CD4-positive, alpha-beta T cell (primary cell): ENCODE measurements at regions of chr7 and their contacts with region 1.

Region 1: GRCh38 chr7:134458806-134459698 is at the start of gene AKR1B1:
- DNase-seq: peak; percentile 77 to 93 (median 83)
- ATAC-seq: peak; percentile 88
- H3K4me3 ChIP-seq: peak within 1 kb of the TSS; percentile 77
- H3K4me3 Mint-ChIP-seq: peak within 1 kb of the TSS; percentile 90
- H3K27ac ChIP-seq: peak within 1 kb of the TSS; percentile 18 to 51
- H3K27ac Mint-ChIP-seq: peak within 1 kb of the TSS; percentile 70
- H3K4me1 ChIP-seq: peaks cover 28% of the 10 kb centered on the region
- H3K4me1 Mint-ChIP-seq: peaks cover 53% of the 10 kb centered on the region
- H3K27me3 ChIP-seq: no peaks in the 10 kb centered on the region
- H3K27me3 Mint-ChIP-seq: no peaks in the 10 kb centered on the region
- CTCF ChIP-seq: peak; percentile 63
- total RNA-seq, gene AKR1B1: 60.6 to 65.5 TPM

Region 2: DNA sequence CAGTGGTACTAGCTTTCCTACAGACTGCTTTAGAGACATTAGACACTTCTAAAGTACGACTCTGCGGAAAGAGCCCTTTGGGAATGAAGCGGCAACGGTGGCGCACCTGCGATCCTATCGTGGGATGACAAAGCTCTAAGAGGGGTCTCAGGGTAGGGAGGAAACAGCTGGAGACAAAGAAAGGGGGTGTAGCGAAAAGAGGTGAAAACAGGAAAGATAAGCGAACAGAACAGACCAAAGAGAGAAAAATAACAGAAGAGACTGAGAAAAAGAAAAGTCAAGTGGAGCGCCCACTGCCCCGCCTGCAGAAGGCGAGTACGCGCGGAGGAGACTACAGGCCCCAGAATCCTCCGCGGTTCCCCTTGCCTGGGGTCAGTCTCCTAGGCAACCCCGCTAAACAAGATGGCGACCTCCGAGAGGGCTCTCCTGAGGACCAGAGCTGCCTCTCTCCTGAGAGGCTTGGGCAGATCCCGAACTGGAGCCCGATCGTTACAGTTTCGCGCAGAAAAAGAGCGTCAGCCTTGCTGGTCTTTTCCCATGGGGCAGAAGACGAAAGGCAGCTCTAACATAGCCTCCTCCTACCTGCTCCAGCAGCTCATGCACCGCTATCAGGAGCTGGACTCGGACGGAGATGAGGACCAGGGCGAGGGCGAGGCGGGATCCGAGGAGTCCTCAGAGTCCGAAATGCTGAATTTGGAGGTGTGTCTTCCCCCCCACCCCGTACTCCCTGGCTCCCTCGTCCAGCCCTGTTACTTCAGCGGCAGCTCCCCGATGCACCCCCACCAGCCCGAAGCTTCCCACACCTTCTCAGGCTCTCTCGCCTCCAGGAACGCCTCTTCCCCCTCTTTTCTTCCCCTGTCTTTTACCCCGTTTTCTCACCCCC is 331.8 kb before region 1 on chr7 and contains the start of gene LRGUK:
- CTCF ChIA-PET with region 1: no interaction called
- POLR2A ChIA-PET with region 1: no interaction called
- intact Hi-C with region 1: loop called in 1 of 2 experiments (anchors 2 kb)
- DNase-seq: peak; percentile 55 to 90 (median 72)
- ATAC-seq: peak; percentile 100
- H3K4me3 ChIP-seq: peak within 1 kb of the TSS; percentile 72
- H3K4me3 Mint-ChIP-seq: peak within 1 kb of the TSS; percentile 91
- H3K27ac ChIP-seq: no peak within 1 kb of the TSS
- H3K27ac Mint-ChIP-seq: no peak within 1 kb of the TSS
- H3K4me1 ChIP-seq: peaks cover 12% of the 10 kb centered on the region
- H3K4me1 Mint-ChIP-seq: peaks cover 21% of the 10 kb centered on the region
- H3K27me3 ChIP-seq: no peaks in the 10 kb centered on the region
- H3K27me3 Mint-ChIP-seq: peaks cover 35% of the 10 kb centered on the region
- CTCF ChIP-seq: no peak
- total RNA-seq, gene LRGUK: 0.20 to 0.27 TPM

Region 3: GRCh38 chr7:134388336-134389019 is 70.6 kb before region 1 on chr7:
- CTCF ChIA-PET with region 1: no interaction called
- POLR2A ChIA-PET with region 1: no interaction called
- intact Hi-C with region 1: no loop called
- DNase-seq: no peak
- ATAC-seq: no peak
- H3K4me3 ChIP-seq: no peak overlapping the region
- H3K4me3 Mint-ChIP-seq: no peak overlapping the region
- H3K27ac ChIP-seq: no peak overlapping the region
- H3K27ac Mint-ChIP-seq: no peak overlapping the region
- H3K4me1 ChIP-seq: no peaks in the 10 kb centered on the region
- H3K4me1 Mint-ChIP-seq: no peaks in the 10 kb centered on the region
- H3K27me3 ChIP-seq: no peaks in the 10 kb centered on the region
- H3K27me3 Mint-ChIP-seq: peaks cover 5% of the 10 kb centered on the region
- CTCF ChIP-seq: no peak

Region 4: DNA sequence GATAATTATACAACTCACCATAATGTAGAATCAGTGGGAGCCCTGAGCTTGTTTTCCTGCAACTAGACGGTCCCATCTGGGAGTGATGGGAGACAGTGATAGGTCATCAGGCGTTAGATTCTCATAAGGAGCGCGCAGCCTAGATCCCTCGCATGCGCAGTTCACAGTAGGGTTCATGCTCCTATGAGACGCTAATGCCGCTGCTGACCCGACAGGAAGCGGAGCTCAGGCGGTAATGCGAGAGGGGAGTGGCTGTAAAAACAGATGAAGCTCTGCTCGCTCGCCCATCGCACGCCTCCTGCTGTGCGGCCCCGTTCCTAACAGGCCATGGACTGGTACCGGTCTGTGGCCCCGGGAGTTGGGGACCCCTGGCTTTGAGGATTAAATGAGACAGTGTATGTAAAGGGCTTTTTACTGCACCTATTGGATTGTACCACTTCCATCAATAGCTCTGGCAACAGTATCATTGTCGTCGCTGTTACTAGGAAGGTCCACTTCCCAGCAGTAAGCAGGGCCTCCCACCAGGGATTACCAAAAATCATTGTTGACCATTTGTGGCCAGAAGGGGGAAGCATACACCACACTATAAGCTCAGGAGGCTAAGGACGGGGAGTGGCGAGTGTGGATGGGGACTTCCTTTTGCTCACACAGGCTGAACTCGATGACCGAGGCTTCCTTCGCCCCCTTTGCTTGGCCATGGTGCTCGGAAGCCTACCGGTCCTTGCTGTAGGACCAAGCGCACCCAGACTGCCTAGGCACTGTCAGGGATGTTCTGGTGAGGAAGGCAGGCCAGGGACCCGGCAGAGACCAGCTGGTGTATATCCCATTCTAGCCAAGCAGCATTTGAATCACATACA is 26.5 kb before region 1 on chr7:
- CTCF ChIA-PET with region 1: interaction called, 25 read pairs
- POLR2A ChIA-PET with region 1: interaction called, 30 read pairs
- intact Hi-C with region 1: no loop called
- DNase-seq: peak; percentile 42 to 88 (median 59)
- ATAC-seq: peak; percentile 92
- H3K4me3 ChIP-seq: peak overlapping the region; percentile 46
- H3K4me3 Mint-ChIP-seq: peak overlapping the region; percentile 82
- H3K27ac ChIP-seq: peak overlapping the region in 1 of 2 donors; percentile 25
- H3K27ac Mint-ChIP-seq: peak overlapping the region; percentile 85
- H3K4me1 ChIP-seq: peaks cover 17% of the 10 kb centered on the region
- H3K4me1 Mint-ChIP-seq: peaks cover 18% of the 10 kb centered on the region
- H3K27me3 ChIP-seq: no peaks in the 10 kb centered on the region
- H3K27me3 Mint-ChIP-seq: no peaks in the 10 kb centered on the region
- CTCF ChIP-seq: peak; percentile 75

Region 5: DNA sequence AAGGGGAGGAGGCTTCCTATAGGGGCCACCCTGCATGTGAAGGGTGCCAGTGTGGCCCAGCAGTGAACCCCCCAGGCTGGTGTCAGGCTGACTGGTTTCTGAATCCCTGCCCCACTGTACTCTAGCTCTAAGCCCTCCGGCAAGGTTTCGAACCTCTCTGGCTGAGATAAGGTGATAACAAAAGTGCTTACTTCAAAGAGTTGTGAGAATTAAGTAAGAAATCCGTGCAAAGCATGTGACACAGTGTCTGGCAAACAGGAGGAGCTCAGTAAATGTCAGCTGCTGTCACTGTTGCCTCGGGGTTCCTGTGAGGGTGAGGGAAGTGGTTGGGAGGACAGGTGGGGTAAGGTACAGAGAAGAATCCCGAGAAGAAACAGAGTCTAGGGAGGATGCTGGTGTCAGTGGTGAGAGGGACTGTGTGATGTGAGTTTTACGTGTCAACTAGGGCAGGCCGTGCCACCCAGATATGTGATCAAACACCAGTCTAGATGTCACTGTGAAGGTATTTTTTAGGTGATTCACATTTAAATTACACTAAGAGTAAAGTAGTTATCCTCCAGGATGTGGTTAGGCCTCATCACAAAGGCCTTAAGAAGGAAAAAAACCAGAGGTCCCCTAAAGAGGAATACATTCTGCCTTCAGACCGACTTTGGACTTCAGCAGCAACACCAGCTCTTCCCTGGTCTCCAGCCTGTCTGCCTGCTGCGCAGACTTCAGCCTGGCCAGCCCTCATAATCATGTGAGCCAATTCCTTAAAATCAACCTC is 252.0 kb after region 1 on chr7:
- CTCF ChIA-PET with region 1: no interaction called
- POLR2A ChIA-PET with region 1: no interaction called
- intact Hi-C with region 1: no loop called
- DNase-seq: peak; percentile 31 to 88 (median 61)
- ATAC-seq: peak; percentile 94
- H3K4me3 ChIP-seq: no peak overlapping the region
- H3K4me3 Mint-ChIP-seq: peak overlapping the region; percentile 25
- H3K27ac ChIP-seq: peak overlapping the region; percentile 68 to 73
- H3K27ac Mint-ChIP-seq: peak overlapping the region; percentile 84
- H3K4me1 ChIP-seq: peaks cover 13% of the 10 kb centered on the region
- H3K4me1 Mint-ChIP-seq: peaks cover 18% of the 10 kb centered on the region
- H3K27me3 ChIP-seq: no peaks in the 10 kb centered on the region
- H3K27me3 Mint-ChIP-seq: no peaks in the 10 kb centered on the region
- CTCF ChIP-seq: no peak

Region 6: GRCh38 chr7:134827889-134828288 is 368.8 kb after region 1 on chr7:
- CTCF ChIA-PET with region 1: no interaction called
- POLR2A ChIA-PET with region 1: no interaction called
- intact Hi-C with region 1: no loop called
- DNase-seq: no peak
- ATAC-seq: no peak
- H3K4me3 ChIP-seq: no peak overlapping the region
- H3K4me3 Mint-ChIP-seq: no peak overlapping the region
- H3K27ac ChIP-seq: no peak overlapping the region
- H3K27ac Mint-ChIP-seq: no peak overlapping the region
- H3K4me1 ChIP-seq: no peaks in the 10 kb centered on the region
- H3K4me1 Mint-ChIP-seq: no peaks in the 10 kb centered on the region
- H3K27me3 ChIP-seq: no peaks in the 10 kb centered on the region
- H3K27me3 Mint-ChIP-seq: no peaks in the 10 kb centered on the region
- CTCF ChIP-seq: no peak

Region 7: GRCh38 chr7:134986363-134987251 is 527.6 kb after region 1 on chr7 and contains the start of gene AGBL3:
- CTCF ChIA-PET with region 1: no interaction called
- POLR2A ChIA-PET with region 1: interaction called, 3 read pairs
- intact Hi-C with region 1: loop called in 1 of 2 experiments (anchors 10 kb)
- DNase-seq: peak; percentile 79 to 93 (median 85)
- ATAC-seq: peak; percentile 91
- H3K4me3 ChIP-seq: peak within 1 kb of the TSS; percentile 90
- H3K4me3 Mint-ChIP-seq: peak within 1 kb of the TSS; percentile 97
- H3K27ac ChIP-seq: peak within 1 kb of the TSS; percentile 89 to 92
- H3K27ac Mint-ChIP-seq: peak within 1 kb of the TSS; percentile 94
- H3K4me1 ChIP-seq: no peaks in the 10 kb centered on the region
- H3K4me1 Mint-ChIP-seq: peaks cover 46% of the 10 kb centered on the region
- H3K27me3 ChIP-seq: no peaks in the 10 kb centered on the region
- H3K27me3 Mint-ChIP-seq: no peaks in the 10 kb centered on the region
- CTCF ChIP-seq: peak; percentile 85
- total RNA-seq, gene AGBL3: 2.2 to 2.5 TPM

Region 8: DNA sequence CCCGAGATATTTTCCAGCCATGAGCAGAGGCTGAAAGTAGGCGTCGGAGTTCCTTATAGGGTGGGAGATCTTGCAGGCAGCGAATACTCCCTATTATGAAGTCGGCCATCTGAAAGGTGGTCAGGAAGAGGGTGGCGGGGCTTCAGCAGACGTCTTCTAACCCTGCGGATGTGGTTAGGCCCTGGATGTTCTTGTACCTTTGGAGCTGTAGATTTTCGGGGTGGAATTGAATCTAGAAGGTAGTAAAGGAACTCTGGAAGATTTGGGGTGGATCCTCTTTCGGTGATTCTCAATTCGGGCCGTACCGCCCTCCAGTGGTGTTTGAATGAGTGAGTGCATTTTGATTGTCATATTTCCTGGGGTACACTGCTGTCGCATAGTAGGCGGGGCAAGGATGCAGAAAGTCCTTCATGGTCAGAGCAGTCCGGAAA is 1099.3 kb after region 1 on chr7:
- CTCF ChIA-PET with region 1: no interaction called
- POLR2A ChIA-PET with region 1: no interaction called
- intact Hi-C with region 1: loop called in 1 of 2 experiments (anchors 10 kb)
- DNase-seq: peak; percentile 29 to 85 (median 52)
- ATAC-seq: peak; percentile 57
- H3K4me3 ChIP-seq: peak overlapping the region; percentile 99
- H3K4me3 Mint-ChIP-seq: no peak overlapping the region
- H3K27ac ChIP-seq: peak overlapping the region; percentile 93 to 99
- H3K27ac Mint-ChIP-seq: no peak overlapping the region
- H3K4me1 ChIP-seq: peaks cover 13% of the 10 kb centered on the region
- H3K4me1 Mint-ChIP-seq: peaks cover 20% of the 10 kb centered on the region
- H3K27me3 ChIP-seq: no peaks in the 10 kb centered on the region
- H3K27me3 Mint-ChIP-seq: no peaks in the 10 kb centered on the region
- CTCF ChIP-seq: peak; percentile 57

Region 9: GRCh38 chr7:136353287-136353686 is 1894.2 kb after region 1 on chr7:
- CTCF ChIA-PET with region 1: no interaction called
- POLR2A ChIA-PET with region 1: no interaction called
- intact Hi-C with region 1: no loop called
- DNase-seq: no peak
- ATAC-seq: no peak
- H3K4me3 ChIP-seq: no peak overlapping the region
- H3K4me3 Mint-ChIP-seq: no peak overlapping the region
- H3K27ac ChIP-seq: no peak overlapping the region
- H3K27ac Mint-ChIP-seq: no peak overlapping the region
- H3K4me1 ChIP-seq: no peaks in the 10 kb centered on the region
- H3K4me1 Mint-ChIP-seq: no peaks in the 10 kb centered on the region
- H3K27me3 ChIP-seq: no peaks in the 10 kb centered on the region
- H3K27me3 Mint-ChIP-seq: no peaks in the 10 kb centered on the region
- CTCF ChIP-seq: no peak